Activated T-helper 1 cell treated with anti-CD3 and anti-CD28 coated beads, Interleukin-12 subunit alpha, Interleukin-12 subunit beta, Interleukin-2, Interleukin-4 antibody, amounts not matched to agents 30 ng/mL and 10 ng/mL and 1 ng/mL, durations not matched to agents 14 hours and 24 hours and 36 hours (primary cell): ENCODE measurements at regions of chr10 and their contacts with region 1.

Region 1: DNA sequence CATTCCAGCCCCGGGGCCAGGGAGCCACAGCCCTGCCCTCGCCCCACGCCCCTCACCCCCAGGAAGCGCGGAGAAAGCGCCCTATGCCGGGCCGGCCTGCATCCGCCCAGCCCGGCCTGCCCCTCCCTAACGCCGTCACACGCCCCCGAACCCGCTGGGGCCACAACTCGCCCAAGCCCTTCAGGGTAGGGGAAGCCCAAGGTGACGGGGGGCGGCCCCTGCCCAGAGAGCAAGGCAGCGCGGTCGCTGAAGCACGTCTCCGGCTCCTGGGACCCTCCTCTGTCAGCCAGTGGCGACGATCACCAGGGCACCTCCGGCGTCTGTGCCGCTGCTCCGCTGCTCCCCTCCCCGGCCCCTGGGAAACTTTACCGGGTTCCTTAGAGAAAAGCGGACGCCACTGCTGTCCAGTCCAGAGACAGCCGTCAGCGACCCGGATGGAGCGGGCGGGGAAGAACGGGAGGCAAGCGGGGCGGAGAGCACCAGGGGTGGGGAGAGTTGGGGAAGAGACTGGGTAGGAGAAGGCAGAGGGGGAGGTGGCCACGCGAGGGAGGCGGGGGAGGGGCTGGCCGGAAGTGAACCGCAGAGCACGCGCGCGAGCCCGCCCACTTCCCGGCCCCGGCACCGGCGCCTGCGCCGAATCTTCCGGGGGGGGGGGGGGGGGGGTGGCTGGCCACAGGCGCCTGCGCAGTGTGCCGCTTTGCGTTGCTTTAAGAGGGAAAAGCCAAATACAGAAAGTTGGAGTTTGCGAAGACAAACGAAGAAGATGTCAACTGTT is at the start of gene HERC4:
- DNase-seq: peak; percentile 82
- H3K4me3 Mint-ChIP-seq: peak within 1 kb of the TSS; percentile 97
- H3K27ac Mint-ChIP-seq: peak within 1 kb of the TSS; percentile 90
- H3K4me1 Mint-ChIP-seq: peaks cover 41% of the 10 kb centered on the region
- H3K27me3 Mint-ChIP-seq: peaks cover 2% of the 10 kb centered on the region
- total RNA-seq, gene HERC4: 42.3 and 53.1 TPM in 2 replicates

Region 2: DNA sequence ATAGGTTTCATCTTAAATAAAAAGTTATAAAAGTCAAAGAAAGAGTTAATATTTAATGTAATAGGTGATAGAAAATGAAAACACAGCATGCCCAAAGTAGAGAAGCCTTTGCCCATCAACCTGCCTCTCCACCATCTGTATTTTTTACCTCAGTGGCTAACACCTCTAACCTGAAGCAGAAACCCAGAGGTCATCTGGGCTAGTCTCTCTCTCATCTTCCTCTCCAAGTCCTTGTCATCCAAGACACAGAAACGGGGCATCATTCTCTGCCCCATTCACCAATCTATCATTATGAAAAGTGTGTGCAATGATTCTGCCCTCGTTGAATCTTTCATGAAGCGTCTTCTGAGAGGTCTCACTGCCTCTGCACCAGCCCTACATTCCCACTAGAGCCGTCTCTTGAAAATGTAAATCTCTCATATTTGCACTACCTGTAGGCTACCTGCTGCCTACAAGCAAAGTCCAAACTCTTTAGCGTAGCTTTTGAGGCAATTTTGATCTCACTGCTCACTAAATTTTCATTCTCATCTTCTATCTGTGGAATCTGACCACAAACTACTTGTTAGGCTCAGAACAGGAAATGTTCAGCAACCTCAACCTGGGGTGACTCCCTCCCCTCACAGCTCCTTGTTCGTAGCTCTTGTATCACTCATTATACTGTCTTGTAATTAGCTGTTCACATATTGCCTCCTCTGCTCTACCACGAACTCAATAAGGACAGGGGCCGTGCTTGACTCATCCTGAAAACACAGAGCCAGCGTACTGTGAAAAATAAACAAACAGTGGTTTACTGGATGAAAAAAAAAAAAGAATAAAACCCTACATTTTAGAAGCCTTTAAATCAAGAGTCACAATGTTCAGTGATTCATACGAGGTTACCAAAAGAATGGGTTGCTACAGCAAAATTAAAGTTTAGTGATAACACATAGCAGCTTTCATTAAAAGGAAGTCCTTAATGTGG is 462.1 kb before region 1 on chr10:
- intact Hi-C with region 1: loop called (anchors 2 kb)
- DNase-seq: peak; percentile 66
- H3K4me3 Mint-ChIP-seq: peak overlapping the region; percentile 47
- H3K27ac Mint-ChIP-seq: peak overlapping the region; percentile 49
- H3K4me1 Mint-ChIP-seq: peaks cover 23% of the 10 kb centered on the region
- H3K27me3 Mint-ChIP-seq: peaks cover 9% of the 10 kb centered on the region

Region 3: GRCh38 chr10:67788025-67788886 is 286.7 kb before region 1 on chr10:
- intact Hi-C with region 1: loop called (anchors 2 kb)
- DNase-seq: peak; percentile 65
- H3K4me3 Mint-ChIP-seq: peak overlapping the region; percentile 70
- H3K27ac Mint-ChIP-seq: peak overlapping the region; percentile 89
- H3K4me1 Mint-ChIP-seq: peaks cover 53% of the 10 kb centered on the region
- H3K27me3 Mint-ChIP-seq: no peaks in the 10 kb centered on the region

Region 4: GRCh38 chr10:67884313-67884841 is 190.6 kb before region 1 on chr10 and contains the start of gene SIRT1:
- intact Hi-C with region 1: loop called (anchors 1 kb)
- DNase-seq: peak; percentile 91
- H3K4me3 Mint-ChIP-seq: peak within 1 kb of the TSS; percentile 91
- H3K27ac Mint-ChIP-seq: peak within 1 kb of the TSS; percentile 87
- H3K4me1 Mint-ChIP-seq: peaks cover 28% of the 10 kb centered on the region
- H3K27me3 Mint-ChIP-seq: peaks cover 4% of the 10 kb centered on the region
- total RNA-seq, gene SIRT1: 27.4 and 29.3 TPM in 2 replicates

Region 5: GRCh38 chr10:68088744-68089143 is 13.8 kb after region 1 on chr10:
- intact Hi-C with region 1: loop called (anchors 1 kb)
- DNase-seq: no peak
- H3K4me3 Mint-ChIP-seq: peak overlapping the region; percentile 1
- H3K27ac Mint-ChIP-seq: peak overlapping the region; percentile 4
- H3K4me1 Mint-ChIP-seq: peaks cover 24% of the 10 kb centered on the region
- H3K27me3 Mint-ChIP-seq: peaks cover 2% of the 10 kb centered on the region

Region 6: DNA sequence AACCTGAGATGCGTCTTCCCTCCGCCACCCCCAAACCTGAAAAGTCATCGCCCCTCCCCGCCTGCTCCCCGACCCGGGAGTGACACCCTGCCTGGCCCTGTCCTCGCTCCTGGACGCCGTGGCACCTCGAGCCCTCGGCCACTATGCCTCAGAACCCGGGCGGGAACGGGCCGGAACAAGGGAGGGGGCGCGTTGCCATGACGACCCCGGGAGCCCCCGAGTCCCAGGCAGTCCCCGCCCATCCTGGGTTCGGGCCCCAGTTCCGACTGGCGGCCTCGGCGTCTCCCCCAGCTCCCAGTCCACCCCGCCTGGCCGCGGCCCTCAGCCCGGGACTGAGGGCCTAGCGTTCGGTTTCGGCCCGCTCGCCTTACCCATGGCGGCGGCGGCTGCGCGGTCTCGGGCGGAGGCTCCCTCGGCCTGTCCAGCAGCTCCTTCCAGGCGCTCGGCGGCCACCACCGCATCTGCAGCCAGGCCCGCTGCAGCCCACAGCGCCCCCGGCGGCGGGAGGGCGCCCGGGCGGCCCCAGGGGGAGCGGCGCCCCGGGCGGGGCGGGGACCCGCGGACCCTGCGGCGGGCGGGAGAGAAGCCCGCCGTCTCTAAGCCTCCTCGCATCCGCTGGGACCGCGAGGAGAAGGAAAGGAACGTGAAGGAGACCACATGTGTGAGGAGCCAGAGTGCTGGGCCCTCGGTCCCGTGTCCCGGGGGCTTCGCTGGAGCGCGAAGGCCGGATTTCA is 332.0 kb after region 1 on chr10 and contains the start of gene RUFY2:
- intact Hi-C with region 1: loop called (anchors 1 kb)
- DNase-seq: peak; percentile 77
- H3K4me3 Mint-ChIP-seq: peak within 1 kb of the TSS; percentile 90
- H3K27ac Mint-ChIP-seq: peak within 1 kb of the TSS; percentile 80
- H3K4me1 Mint-ChIP-seq: peaks cover 13% of the 10 kb centered on the region
- H3K27me3 Mint-ChIP-seq: no peaks in the 10 kb centered on the region
- total RNA-seq, gene RUFY2: 10.4 and 12.3 TPM in 2 replicates